Left ventricle myocardium superior (tissue), 1 donor: ENCODE measurements at regions of chr18 and their contacts with region 1.

Region 1: GRCh38 chr18:55234366-55235093 is 275.3 kb upstream of the CCDC68 start:
- DNase-seq: peak; percentile 74
- ATAC-seq: peak; percentile 89

Region 2: DNA sequence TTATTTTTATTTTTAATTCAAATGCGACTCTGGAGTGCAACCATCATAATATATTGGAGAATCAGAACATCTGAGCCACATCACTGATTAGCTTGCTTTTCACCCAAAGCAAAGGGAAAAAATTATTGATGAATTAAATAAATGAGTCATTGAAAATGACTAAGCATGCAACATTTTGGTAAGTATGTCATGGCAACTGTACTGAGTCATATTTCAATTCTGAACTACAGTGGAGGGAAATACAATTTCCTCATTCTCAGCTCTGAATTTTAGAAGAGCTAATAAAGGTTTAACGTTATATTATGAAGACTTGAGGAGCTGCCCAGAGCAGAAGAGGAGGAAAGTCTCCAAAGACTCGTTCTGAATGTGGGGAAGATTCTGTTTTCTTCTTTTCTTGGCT is 185.6 kb before region 1 on chr18:
- intact Hi-C with region 1: no loop called
- DNase-seq: no peak
- ATAC-seq: no peak

Region 3: GRCh38 chr18:55415258-55415871 is 180.8 kb after region 1 on chr18:
- intact Hi-C with region 1: loop called (anchors 10 kb)
- DNase-seq: peak; percentile 95
- ATAC-seq: peak; percentile 90

Region 4: DNA sequence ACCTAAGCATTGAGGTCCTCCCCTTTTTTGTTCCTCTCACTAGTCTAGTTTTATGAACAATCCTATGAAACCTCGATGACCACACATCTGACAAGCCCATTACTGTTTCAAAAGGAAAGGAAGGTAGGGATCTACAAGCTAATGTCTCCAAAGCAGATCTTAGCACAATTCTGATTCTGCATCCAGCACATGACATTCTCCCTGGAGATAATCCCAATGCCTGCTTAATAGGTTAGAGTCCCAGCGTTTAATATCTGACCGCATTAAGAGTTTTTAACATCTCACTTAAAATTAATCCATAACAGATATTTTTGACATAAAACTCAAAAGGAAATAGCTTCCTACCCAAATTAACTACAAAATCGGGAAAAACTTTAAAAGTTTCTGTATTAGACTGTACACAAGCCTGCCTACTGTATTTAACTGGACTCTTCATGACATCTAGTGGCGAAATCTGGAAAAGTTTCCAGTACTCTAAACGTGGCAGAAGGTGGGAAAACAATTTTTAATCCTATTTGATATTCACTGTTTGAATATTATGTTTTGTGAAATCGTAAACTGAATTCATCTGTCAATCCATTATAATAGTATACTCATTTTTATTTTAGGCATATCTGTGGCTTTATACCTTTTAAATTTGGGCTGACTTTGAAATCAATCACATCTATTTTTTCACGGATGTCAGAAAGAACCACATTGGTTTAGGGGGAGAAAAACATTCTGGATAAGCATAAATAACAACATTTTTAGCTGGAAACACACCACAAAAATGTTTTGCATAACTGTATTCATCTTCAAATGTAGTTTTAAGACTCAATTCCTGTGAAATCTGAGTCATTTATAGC is 1341.5 kb after region 1 on chr18:
- intact Hi-C with region 1: loop called (anchors 5 kb)
- DNase-seq: no peak
- ATAC-seq: peak; percentile 88